H1 (cell line): ENCODE measurements at regions of chr16 and their contacts with region 1.

Region 1: DNA sequence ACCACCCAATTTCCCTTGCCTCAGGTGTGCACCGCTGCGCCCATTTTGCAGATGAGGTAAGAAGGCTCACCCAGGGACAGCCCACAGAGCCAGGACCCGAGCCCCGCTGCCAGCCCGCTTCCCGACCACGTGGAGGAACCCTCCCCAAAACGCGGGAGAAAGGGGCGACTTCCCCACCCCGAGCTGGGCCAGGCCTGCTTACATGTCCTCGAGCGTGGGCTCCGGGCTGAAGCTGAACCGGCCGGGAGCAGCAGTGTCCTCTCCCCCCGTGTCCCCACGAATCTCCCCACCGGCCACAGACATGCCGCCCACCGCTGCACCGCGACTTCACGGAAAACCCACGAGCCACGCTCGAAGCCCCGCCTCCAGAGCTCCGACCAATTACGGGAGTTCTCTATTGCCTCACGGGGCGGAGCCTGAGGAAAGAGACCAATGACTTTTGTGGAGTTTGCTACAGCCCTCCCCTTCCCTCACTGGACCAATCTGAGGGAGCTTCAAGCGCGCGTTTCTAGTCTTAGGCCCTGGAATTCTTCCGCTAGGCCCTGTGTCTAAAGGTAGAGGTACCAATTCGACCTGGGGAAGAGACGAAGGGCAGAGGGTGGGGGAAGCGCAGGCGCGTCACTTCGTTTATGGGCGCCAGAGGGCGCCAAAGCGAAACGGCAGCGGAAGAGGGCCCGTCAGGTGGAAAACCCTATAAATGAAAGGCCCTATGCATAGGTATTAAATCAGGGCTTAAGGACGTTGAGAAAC is at the start of gene DCTPP1:
- DNase-seq: peak; percentile 87 to 96
- H3K4me3 ChIP-seq: peak within 1 kb of the TSS; percentile 63 to 85 (median 80)
- H3K27ac ChIP-seq: peak within 1 kb of the TSS; percentile 34; the same call in 1 of the 2 replicates
- H3K4me1 ChIP-seq: peaks cover 0 to 6% (median 4%) of the 10 kb centered on the region in 4 experiments; a peak in 4 of 7 replicates
- H3K27me3 ChIP-seq: no peaks in the 10 kb centered on the region
- CTCF ChIP-seq: peak; percentile 73 to 82 (median 74)
- EP300 ChIP-seq: peak in 1 of 2 experiments; percentile 55; a peak in 1 of 3 replicates
- POLR2A ChIP-seq: peak in 1 of 2 experiments; percentile 47; a peak in 1 of 3 replicates
- RAD21 ChIP-seq: peak; percentile 46 to 54
- total RNA-seq, gene DCTPP1: 90.4 and 94.5 TPM in 2 replicates

Region 2: DNA sequence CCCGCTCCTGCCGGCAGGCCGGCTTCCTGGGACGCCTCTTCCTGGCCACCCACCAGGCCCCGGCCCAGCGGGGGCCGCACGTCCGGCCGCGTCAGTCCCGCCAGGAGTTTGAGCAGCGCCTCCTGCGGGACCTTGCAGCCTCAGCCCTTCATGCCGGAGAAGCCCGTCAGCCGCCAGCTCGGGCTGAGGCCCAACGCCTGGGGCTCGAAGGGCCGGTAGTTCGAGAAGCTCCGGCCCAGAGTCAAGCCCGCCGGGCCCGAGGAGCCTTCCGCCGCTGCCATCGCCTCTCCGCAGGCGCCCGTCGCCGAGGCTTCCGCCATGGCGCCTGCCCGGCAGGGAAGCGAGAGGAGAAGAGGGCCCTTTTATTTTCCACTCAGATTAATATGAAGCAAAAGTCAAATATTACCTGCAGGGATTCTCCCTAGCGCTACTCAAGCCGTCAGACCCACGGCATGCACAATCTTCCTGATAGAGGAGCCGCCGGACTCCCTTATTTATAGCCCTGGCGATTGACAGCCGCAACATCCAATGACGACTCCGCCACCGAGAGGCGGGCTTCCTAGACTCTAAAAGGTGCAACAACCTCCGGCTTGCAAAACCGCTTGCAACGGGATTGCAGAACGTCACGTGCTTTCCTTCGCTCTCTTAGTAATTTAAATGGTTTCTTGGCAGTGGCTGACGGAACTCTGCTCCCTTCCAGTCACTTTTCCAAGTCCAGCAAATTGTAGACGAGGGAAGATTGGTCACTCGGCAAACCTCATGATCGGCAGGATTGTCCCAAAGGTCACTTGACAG is 15.8 kb after region 1 on chr16 and contains the start of gene SEPHS2:
- CTCF ChIA-PET with region 1: interaction called, 11 read pairs
- POLR2A ChIA-PET with region 1: interaction called, 5 read pairs
- DNase-seq: peak; percentile 96 to 97
- H3K4me3 ChIP-seq: peak within 1 kb of the TSS; percentile 71 to 86 (median 78)
- H3K27ac ChIP-seq: peak within 1 kb of the TSS; percentile 44; the same call in 1 of the 2 replicates
- H3K4me1 ChIP-seq: peaks cover 0 to 9% (median 6%) of the 10 kb centered on the region in 4 experiments; a peak in 5 of 7 replicates
- H3K27me3 ChIP-seq: peaks cover 0 to 4% (median 1%) of the 10 kb centered on the region in 4 experiments; a peak in 1 of 7 replicates
- CTCF ChIP-seq: peak; percentile 28 to 39 (median 33); a peak in 3 of 4 replicates
- EP300 ChIP-seq: no peak
- POLR2A ChIP-seq: peak; percentile 65 to 88
- RAD21 ChIP-seq: no peak; a peak in 2 of 4 replicates
- total RNA-seq, gene SEPHS2: 61.8 and 62.0 TPM in 2 replicates

Region 3: GRCh38 chr16:30592871-30593270 is 163.0 kb after region 1 on chr16:
- CTCF ChIA-PET with region 1: interaction called, 14 read pairs
- POLR2A ChIA-PET with region 1: interaction called, 7 read pairs
- DNase-seq: no peak
- H3K4me3 ChIP-seq: no peak overlapping the region
- H3K27ac ChIP-seq: no peak overlapping the region
- H3K4me1 ChIP-seq: no peaks in the 10 kb centered on the region
- H3K27me3 ChIP-seq: no peaks in the 10 kb centered on the region
- CTCF ChIP-seq: no peak
- EP300 ChIP-seq: no peak
- POLR2A ChIP-seq: no peak
- RAD21 ChIP-seq: no peak

Region 4: GRCh38 chr16:30609926-30610839 is 180.3 kb after region 1 on chr16 and contains the start of gene ZNF689:
- CTCF ChIA-PET with region 1: interaction called, 17 read pairs
- POLR2A ChIA-PET with region 1: interaction called, 5 read pairs
- DNase-seq: peak; percentile 98 to 99
- H3K4me3 ChIP-seq: peak within 1 kb of the TSS; percentile 88 to 98 (median 92)
- H3K27ac ChIP-seq: peak within 1 kb of the TSS; percentile 95
- H3K4me1 ChIP-seq: peaks cover 0 to 3% (median 2%) of the 10 kb centered on the region in 4 experiments; a peak in 3 of 7 replicates
- H3K27me3 ChIP-seq: no peaks in the 10 kb centered on the region
- CTCF ChIP-seq: no peak
- EP300 ChIP-seq: no peak
- POLR2A ChIP-seq: peak; percentile 78 to 86
- RAD21 ChIP-seq: 0 out of 4 replicates have a peak, but pooled peaks of 1 of the 2 experiments have one; percentile 1
- total RNA-seq, gene ZNF689: 14.2 and 14.3 TPM in 2 replicates

Region 5: GRCh38 chr16:30628627-30629540 is 199.0 kb after region 1 on chr16:
- CTCF ChIA-PET with region 1: interaction called, 10 read pairs
- POLR2A ChIA-PET with region 1: interaction called, 3 read pairs
- DNase-seq: peak in 1 of 2 experiments; percentile 98
- H3K4me3 ChIP-seq: no peak overlapping the region
- H3K27ac ChIP-seq: no peak overlapping the region
- H3K4me1 ChIP-seq: no peaks in the 10 kb centered on the region
- H3K27me3 ChIP-seq: no peaks in the 10 kb centered on the region
- CTCF ChIP-seq: peak; percentile 82 to 94 (median 84)
- EP300 ChIP-seq: no peak
- POLR2A ChIP-seq: no peak
- RAD21 ChIP-seq: peak; percentile 69 to 76